GM10248 (cell line): ENCODE measurements at regions of chr9 and their contacts with region 1.

Region 1: DNA sequence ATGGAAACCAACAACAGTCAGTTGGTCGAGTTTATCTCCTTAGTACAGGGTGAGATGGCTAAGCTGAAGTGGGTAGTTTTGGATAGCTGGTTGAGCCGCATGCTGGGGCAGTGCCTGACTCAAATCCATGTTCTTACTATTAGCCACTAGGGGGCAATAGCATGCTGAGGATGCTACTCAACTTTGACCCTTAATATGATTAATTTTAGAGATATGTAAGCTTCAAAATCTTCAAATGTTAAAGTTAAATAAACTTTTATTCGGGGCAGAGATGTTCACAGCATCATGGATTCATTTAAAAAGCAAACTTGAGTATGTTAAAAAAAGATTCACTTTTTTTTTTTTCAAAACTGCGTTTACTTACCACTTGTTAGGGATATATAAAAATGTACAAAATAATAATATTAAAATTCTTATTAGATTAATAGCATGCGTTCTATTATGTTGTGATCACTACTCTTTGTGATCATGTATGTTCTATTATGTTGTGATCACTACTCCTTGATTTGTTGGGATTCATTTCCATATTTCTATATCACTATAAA is 57.0 kb downstream of the C9orf153 start:
- DNase-seq: peak; percentile 60
- CTCF ChIP-seq: peak; percentile 76

Region 2: GRCh38 chr9:86187121-86187520 is 15.3 kb before region 1 on chr9:
- CTCF ChIA-PET with region 1: interaction called, 16 read pairs
- POLR2A ChIA-PET with region 1: no interaction called
- DNase-seq: no peak
- CTCF ChIP-seq: no peak

Region 3: DNA sequence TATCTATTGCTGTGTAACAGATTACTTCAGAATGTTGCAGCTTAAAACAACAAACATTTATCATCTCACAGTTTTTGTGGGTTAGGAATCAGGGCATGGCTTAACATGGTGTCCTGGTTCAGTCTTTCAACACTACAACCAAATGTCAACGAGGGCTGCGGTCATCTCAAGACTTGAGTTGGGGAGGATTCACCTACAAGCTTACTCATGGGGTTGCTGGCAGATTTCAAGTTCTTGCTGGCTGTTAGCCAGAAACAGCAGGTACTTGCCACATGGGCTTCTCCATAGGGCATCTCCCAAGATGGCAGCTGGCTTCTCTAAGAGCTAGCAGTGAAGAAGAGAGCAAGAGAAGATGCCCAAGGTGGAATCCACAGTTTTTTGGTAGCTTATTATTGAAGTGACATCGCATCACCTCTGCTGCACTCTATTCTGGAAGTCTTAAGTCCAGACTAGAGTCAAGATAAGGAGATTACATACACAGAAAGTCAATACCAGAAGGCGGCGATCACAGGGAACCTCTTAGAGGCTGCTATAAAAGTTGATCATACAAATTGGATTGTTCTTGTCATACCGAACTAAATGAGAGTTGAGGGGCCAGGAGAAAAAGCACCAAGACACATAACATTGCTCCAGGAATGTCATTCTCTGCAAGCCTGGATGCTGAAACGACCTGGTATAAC is 14.8 kb after region 1 on chr9:
- CTCF ChIA-PET with region 1: interaction called, 32 read pairs
- POLR2A ChIA-PET with region 1: no interaction called
- DNase-seq: no peak
- CTCF ChIP-seq: no peak

Region 4: GRCh38 chr9:86222667-86223066 is 20.3 kb after region 1 on chr9:
- CTCF ChIA-PET with region 1: interaction called, 29 read pairs
- POLR2A ChIA-PET with region 1: no interaction called
- DNase-seq: no peak
- CTCF ChIP-seq: no peak

Region 5: DNA sequence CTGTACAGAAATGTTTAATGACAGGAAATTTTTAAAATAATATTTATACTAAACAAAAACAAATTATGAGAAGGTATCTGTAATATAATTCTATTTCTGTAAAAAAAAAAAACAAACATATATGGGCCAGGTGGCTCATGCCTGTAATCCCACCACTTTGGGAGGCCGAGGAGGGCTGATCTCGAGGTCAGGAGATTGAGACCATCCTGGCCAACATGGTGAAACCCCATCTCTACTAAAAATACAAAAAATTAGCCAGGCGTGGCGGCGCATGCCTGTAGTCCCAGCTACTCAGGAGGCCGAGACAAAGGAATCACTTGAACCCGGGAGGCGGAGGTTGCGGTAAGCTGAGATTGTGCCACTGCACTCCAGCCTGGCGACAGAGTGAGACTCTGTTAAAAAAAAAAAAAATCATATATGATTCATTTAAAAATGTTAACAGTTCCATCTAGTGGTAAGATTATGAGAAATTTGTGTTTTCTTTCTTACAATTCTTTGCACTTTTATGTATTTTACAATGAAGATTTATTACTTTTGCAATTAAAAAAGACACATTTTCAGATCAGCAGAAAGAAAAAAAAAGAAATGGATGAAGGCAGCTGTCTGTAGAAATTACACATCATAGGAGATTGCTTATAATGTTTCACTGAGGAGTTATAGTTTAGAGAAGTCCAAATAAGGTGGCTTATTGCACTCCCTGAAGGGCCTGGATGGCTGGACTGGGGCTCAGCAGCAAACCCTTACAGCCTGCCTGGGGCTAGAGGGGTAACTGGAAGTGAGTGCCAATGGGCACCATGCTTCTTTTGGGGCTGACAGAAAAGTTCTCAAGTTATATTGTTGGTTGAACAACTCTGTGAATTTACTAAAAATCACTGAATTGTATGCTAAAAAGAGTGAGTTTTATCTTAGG is 36.7 kb after region 1 on chr9:
- CTCF ChIA-PET with region 1: interaction called, 22 read pairs
- POLR2A ChIA-PET with region 1: no interaction called
- DNase-seq: no peak
- CTCF ChIP-seq: no peak

Region 6: DNA sequence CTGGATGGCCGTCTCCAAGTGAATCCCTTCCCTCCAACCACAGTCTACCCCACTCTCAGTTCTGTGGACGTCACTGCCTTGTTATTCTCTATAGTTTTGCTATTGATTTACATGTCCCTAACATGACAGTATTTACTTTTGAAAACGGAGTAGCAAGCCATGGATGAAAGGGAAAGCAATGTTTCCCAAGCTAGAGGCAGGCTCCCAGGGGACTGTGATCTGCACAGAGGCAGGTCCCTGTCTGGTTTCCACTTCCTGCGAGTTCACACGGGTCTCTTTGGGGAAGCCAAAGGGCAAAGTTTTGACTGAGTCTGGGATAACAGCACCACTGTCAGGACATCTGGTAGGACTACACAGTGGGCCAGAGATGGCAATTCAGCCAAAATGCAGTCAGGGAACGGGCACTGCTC is 44.3 kb after region 1 on chr9:
- CTCF ChIA-PET with region 1: interaction called, 22 read pairs
- POLR2A ChIA-PET with region 1: no interaction called
- DNase-seq: peak; percentile 45
- CTCF ChIP-seq: peak; percentile 50

Region 7: GRCh38 chr9:86337469-86338108 is 135.2 kb after region 1 on chr9:
- CTCF ChIA-PET with region 1: no interaction called
- POLR2A ChIA-PET with region 1: no interaction called
- DNase-seq: no peak
- CTCF ChIP-seq: no peak